ENCODE measurements at regions of chr5 and their contacts with region 1.

Region 1: DNA sequence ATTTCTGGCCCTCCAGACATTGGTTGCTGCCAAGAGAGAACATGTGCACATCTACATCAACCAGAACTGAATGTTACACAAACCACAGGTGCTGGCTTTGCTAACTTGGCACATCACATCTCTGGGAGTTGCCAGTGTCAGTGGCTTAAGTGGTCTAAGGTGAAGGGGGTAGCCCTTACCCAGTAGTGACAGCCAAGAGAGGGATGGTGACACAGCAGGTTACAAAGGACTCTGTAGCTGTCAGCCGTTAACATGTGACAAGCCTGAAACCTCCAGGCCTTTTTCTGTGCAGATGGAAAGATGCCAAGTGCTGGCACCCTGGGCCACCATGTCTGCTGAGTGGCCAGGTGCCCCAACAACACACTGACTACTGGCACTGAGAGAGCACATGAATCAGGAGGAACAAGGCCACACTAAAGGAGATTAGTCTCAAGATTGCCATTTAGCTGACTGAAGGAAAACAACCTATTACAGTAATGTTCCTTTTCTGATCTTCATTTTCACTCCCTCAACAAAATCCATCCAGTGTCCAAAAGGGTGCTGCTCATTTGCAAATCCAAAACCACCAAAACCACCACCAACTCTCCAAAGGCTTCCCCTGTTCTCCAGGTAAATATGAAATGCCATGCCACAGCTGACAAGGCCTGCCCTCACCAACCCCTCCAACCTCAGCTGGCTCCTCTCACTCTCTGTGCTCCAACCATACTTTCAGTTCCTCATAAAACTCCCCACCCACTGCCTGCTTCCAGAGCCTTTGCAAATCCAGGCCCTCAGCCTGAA is 20.2 kb downstream of the SIL1 start:
- DNase-seq: peak; percentile 75 to 92
- ATAC-seq: peak; percentile 93 to 97 (median 96)
- H3K4me3 ChIP-seq: no peak overlapping the region
- H3K27ac ChIP-seq: peak overlapping the region; percentile 86
- H3K4me1 ChIP-seq: peaks cover 53% of the 10 kb centered on the region
- H3K27me3 ChIP-seq: no peaks in the 10 kb centered on the region
- CTCF ChIP-seq: no peak

Region 2: GRCh38 chr5:138945421-138946240 is 232.4 kb before region 1 on chr5:
- intact Hi-C with region 1: no loop called
- DNase-seq: no peak
- ATAC-seq: no peak
- H3K4me3 ChIP-seq: no peak overlapping the region
- H3K27ac ChIP-seq: no peak overlapping the region
- H3K4me1 ChIP-seq: peaks cover 5% of the 10 kb centered on the region
- H3K27me3 ChIP-seq: no peaks in the 10 kb centered on the region
- CTCF ChIP-seq: no peak

Region 3: DNA sequence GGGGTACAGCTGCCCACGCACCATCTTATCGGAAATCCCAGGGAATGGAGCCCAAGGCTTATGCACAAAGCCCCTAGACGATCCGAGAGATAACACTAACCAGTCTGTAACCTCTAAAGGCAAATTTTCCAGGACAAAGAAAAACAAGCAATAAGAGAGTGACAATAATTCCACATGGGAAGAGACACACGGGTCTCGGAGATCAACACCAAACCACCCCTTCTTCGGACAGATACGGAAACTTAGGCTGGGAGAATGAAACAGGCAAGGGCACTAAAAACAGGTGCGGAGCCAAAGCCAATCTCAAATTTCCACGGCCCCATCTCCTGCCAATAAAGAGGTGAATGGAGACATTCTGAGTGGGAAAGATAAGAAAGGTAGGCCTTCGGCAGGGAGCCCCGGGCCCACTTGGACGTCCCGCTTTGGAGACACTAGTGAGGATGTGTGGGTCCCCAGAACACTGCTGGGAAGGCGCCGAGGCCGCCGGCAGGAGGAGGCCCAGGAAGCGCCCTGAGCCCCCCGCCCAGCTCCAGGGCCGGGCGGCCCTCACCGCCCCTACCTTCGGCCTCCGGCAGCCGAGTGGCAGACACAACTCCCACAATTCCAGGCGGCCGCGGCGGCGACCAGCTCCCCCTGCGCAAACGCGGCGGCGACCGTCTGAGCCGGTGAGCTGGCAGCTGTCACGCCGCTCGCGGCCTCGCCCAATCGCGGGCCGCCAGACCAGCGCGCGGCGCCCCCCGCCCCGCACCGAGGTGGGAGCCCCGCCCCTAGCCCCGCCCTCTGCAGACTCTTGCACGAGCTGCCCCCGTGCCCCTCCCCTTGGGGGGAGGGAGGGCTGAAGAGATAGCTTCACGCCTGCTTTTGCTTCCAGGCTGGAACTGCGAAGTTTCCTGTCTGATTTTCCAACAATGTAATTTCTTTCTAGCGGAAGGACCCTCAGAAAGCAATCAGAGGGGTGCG is 20.0 kb after region 1 on chr5 and contains the start of gene SIL1:
- intact Hi-C with region 1: loop called in 1 of 2 experiments (anchors 2 kb)
- DNase-seq: peak; percentile 98 to 99
- ATAC-seq: peak; percentile 98 to 99 (median 98)
- H3K4me3 ChIP-seq: peak within 1 kb of the TSS; percentile 76
- H3K27ac ChIP-seq: peak within 1 kb of the TSS; percentile 93
- H3K4me1 ChIP-seq: peaks cover 5% of the 10 kb centered on the region
- H3K27me3 ChIP-seq: no peaks in the 10 kb centered on the region
- CTCF ChIP-seq: no peak
- total RNA-seq, gene SIL1: 37.3 to 52.9 (median 39.4) TPM